CD4-positive, alpha-beta T cell (primary cell): ENCODE measurements at regions of chr17 and their contacts with region 1.

Region 1: GRCh38 chr17:38584350-38584925 is 21.3 kb downstream of the SRCIN1 start:
- DNase-seq: peak in 13 of 14 experiments; percentile 22 to 77 (median 51)
- ATAC-seq: peak; percentile 88
- H3K4me3 ChIP-seq: no peak overlapping the region
- H3K4me3 Mint-ChIP-seq: no peak overlapping the region
- H3K27ac ChIP-seq: no peak overlapping the region
- H3K27ac Mint-ChIP-seq: no peak overlapping the region
- H3K4me1 ChIP-seq: peaks cover 21% of the 10 kb centered on the region
- H3K4me1 Mint-ChIP-seq: peaks cover 9% of the 10 kb centered on the region
- H3K27me3 ChIP-seq: peaks cover 64 to 85% of the 10 kb centered on the region in 2 experiments
- H3K27me3 Mint-ChIP-seq: peaks cover 86% of the 10 kb centered on the region
- CTCF ChIP-seq: peak; percentile 91

Region 2: GRCh38 chr17:38498186-38498752 is 86.2 kb before region 1 on chr17:
- CTCF ChIA-PET with region 1: no interaction called
- POLR2A ChIA-PET with region 1: no interaction called
- intact Hi-C with region 1: loop called in 1 of 2 experiments (anchors 2 kb)
- DNase-seq: no peak
- ATAC-seq: no peak
- H3K4me3 ChIP-seq: no peak overlapping the region
- H3K4me3 Mint-ChIP-seq: no peak overlapping the region
- H3K27ac ChIP-seq: no peak overlapping the region
- H3K27ac Mint-ChIP-seq: no peak overlapping the region
- H3K4me1 ChIP-seq: no peaks in the 10 kb centered on the region
- H3K4me1 Mint-ChIP-seq: no peaks in the 10 kb centered on the region
- H3K27me3 ChIP-seq: no peaks in the 10 kb centered on the region
- H3K27me3 Mint-ChIP-seq: no peaks in the 10 kb centered on the region
- CTCF ChIP-seq: no peak